Stomach (tissue), 19 donors: ENCODE measurements at regions of chr3 and their contacts with region 1.

Region 1: GRCh38 chr3:73056014-73056844 is 5.2 kb upstream of the EBLN2 start:
- DNase-seq: peak in 1 of 2 donors; percentile 75
- H3K4me3 ChIP-seq: no peak overlapping the region
- H3K27ac ChIP-seq: peak overlapping the region in 2 of 5 donors; percentile 10 to 40
- H3K4me1 ChIP-seq: peaks cover 8 to 17% (median 10%) of the 10 kb centered on the region in 4 donors
- H3K27me3 ChIP-seq: no peaks in the 10 kb centered on the region
- CTCF ChIP-seq: peak in 3 of 7 experiments; percentile 28 to 51 (median 49)
- EP300 ChIP-seq: no peak
- POLR2A ChIP-seq: no peak

Region 2: GRCh38 chr3:72949016-72949415 is 107.2 kb before region 1 on chr3:
- intact Hi-C with region 1: loop called (anchors 10 kb)
- DNase-seq: no peak
- H3K4me3 ChIP-seq: no peak overlapping the region
- H3K27ac ChIP-seq: no peak overlapping the region
- H3K4me1 ChIP-seq: peaks cover 0 to 9% (median 0%) of the 10 kb centered on the region in 4 donors
- H3K27me3 ChIP-seq: no peaks in the 10 kb centered on the region
- CTCF ChIP-seq: no peak
- EP300 ChIP-seq: no peak
- POLR2A ChIP-seq: no peak